Esophagus muscularis mucosa (tissue), 4 donors: ENCODE measurements at regions of chr4 and their contacts with region 1.

Region 1: GRCh38 chr4:16897991-16898827 is at the start of gene LDB2:
- DNase-seq: no peak
- H3K4me3 ChIP-seq: peak within 1 kb of the TSS; percentile 46 to 65 (median 56)
- H3K27ac ChIP-seq: peak within 1 kb of the TSS; percentile 60 to 72 (median 66)
- H3K4me1 ChIP-seq: peaks cover 0 to 39% (median 15%) of the 10 kb centered on the region in 4 donors
- H3K27me3 ChIP-seq: peaks cover 0 to 10% (median 0%) of the 10 kb centered on the region in 4 donors
- CTCF ChIP-seq: no peak
- EP300 ChIP-seq: no peak
- POLR2A ChIP-seq: no peak
- total RNA-seq, gene LDB2: 16.2 to 31.7 (median 22.4) TPM

Region 2: DNA sequence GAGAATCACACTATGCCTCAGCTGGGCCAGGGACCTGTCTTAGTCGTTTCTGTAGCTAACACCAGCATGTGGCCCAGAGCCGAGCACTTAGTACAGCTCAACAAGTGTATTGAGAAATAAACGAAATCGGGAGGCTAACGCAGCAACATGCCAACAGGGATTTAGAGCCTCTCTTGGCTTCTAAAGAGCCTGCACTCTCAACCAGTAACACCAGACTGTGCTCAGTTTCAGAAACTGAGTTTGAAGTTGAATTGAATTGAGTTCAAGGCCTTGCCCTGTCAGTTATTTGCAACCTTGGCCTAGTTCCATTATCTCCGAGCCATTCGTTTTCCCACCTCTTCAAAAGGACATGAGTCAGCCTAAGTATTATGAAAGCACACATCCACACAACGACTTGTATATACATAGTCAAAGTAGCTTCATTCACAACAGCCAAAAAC is 71.5 kb after region 1 on chr4:
- intact Hi-C with region 1: loop called (anchors 5 kb)
- DNase-seq: peak; percentile 94
- H3K4me3 ChIP-seq: peak overlapping the region in 1 of 4 donors; percentile 10
- H3K27ac ChIP-seq: peak overlapping the region; percentile 69 to 81 (median 74)
- H3K4me1 ChIP-seq: peaks cover 4 to 41% (median 38%) of the 10 kb centered on the region in 4 donors
- H3K27me3 ChIP-seq: no peaks in the 10 kb centered on the region
- CTCF ChIP-seq: no peak
- EP300 ChIP-seq: no peak
- POLR2A ChIP-seq: no peak